ENCODE measurements at regions of chr1 and their contacts with region 1.

Region 1: DNA sequence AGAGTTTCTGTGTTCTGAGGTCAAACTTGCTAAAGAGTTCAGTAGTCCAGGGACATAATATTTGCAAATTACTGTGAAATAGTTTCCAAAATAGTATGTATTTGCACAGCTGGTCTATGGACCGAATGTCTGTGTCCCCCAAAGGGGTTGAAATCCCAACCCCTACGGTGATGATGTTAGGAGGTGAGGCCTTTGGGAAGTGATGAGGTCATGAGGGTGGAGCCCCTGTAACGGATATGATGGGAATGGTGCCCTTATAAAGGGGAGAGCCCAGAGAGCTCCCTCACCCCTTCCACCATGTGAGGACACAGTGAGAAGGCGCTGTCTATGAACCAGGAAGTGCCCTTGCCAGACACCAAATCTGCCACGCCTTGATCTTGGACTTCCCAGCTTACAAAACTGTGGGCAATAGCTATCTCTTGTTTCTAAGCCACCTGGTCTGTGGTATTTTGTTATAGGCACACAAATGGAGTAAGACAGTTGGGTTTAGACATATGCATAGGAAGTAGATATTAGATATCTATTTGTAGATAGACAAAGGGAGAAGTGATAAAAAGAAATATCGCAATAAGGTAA is 21.7 kb downstream of the RNF187 start:
- DNase-seq: no peak

Region 2: GRCh38 chr1:228082135-228082891 is 426.6 kb before region 1 on chr1 and contains the start of gene ARF1:
- intact Hi-C with region 1: loop called in 1 of 2 experiments (anchors 5 kb)
- DNase-seq: peak; percentile 98
- total RNA-seq, gene ARF1: 300 to 342 TPM

Region 3: GRCh38 chr1:228405987-228406265 is 103.0 kb before region 1 on chr1:
- intact Hi-C with region 1: no loop called
- DNase-seq: no peak

Region 4: GRCh38 chr1:228527596-228527995 is 18.7 kb after region 1 on chr1:
- intact Hi-C with region 1: no loop called
- DNase-seq: no peak

Region 5: DNA sequence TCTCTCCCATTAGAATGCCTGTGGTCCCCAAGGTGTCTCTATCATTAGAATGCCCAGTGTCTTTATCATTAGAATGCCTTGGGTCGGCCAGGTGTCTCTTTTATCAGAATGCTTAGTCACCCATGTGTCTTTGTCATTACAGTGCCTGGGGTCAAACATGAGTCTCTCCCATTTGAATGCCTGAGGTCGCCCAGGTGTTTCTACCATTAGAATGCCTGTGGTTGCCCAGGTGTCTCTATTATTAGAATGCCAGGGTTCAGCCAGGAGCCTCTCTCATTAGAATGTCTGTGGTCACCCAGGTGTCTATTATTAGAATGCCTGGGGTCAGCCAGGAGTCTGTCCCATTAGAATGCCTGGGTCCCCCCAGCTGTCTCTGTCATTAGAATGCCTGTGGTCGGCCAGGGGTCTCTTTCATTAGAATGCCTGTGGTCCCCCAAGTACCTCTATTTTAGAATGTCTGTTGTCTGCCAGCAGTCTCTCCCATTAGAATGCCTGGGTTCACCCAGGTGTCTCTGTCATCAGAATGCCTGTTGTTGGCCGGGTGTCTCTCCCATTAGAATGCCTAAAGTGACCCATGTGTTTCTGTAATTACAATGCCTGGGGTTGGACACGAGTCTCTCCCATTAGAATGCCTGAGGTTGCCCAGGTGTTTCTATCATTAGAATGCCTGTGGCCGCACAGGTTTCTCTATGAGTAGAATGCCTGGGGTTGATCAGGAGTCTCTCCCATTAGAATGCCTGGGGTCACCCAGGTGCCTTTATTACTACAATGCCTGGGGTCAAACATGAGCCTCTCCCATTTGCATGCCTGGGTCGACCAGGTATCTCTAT is 35.3 kb after region 1 on chr1:
- intact Hi-C with region 1: no loop called
- DNase-seq: peak; percentile 29

Measured in posterior vena cava (tissue), 2 donors.